HCT116 (cell line): ENCODE measurements at regions of chr15 and their contacts with region 1.

Region 1: GRCh38 chr15:90320061-90320884 is 31.8 kb upstream of the ZNF774 start:
- DNase-seq: peak; percentile 81
- ATAC-seq: peak; percentile 98
- H3K4me3 ChIP-seq: peak overlapping the region in 1 of 2 experiments; percentile 25; a peak in 1 of 4 replicates
- H3K27ac ChIP-seq: no peak overlapping the region
- H3K4me1 ChIP-seq: peaks cover 7 to 10% of the 10 kb centered on the region in 2 experiments; a peak in 2 of 4 replicates
- H3K27me3 ChIP-seq: no peaks in the 10 kb centered on the region
- CTCF ChIP-seq: peak; percentile 97 to 100 (median 99)
- POLR2A ChIP-seq: no peak
- RAD21 ChIP-seq: peak; percentile 97

Region 2: GRCh38 chr15:90300988-90301706 is 19.1 kb before region 1 on chr15:
- CTCF ChIA-PET with region 1: interaction called, 13 read pairs
- POLR2A ChIA-PET with region 1: no interaction called
- RAD21 ChIA-PET with region 1: no interaction called
- intact Hi-C with region 1: no loop called
- DNase-seq: peak; percentile 47
- ATAC-seq: peak; percentile 98
- H3K4me3 ChIP-seq: 0 out of 4 replicates have a peak overlapping the region, but pooled peaks of 1 of the 2 experiments have one; percentile 14
- H3K27ac ChIP-seq: peak overlapping the region; percentile 5; the same call in 1 of the 2 replicates
- H3K4me1 ChIP-seq: peaks cover 0 to 8% of the 10 kb centered on the region in 2 experiments; a peak in 3 of 4 replicates
- H3K27me3 ChIP-seq: no peaks in the 10 kb centered on the region
- CTCF ChIP-seq: peak; percentile 53 to 95 (median 92); a peak in 5 of 6 replicates
- POLR2A ChIP-seq: no peak
- RAD21 ChIP-seq: peak; percentile 27

Region 3: GRCh38 chr15:90482124-90483011 is 162.1 kb after region 1 on chr15:
- CTCF ChIA-PET with region 1: interaction called, 57 read pairs
- POLR2A ChIA-PET with region 1: interaction called, 3 read pairs
- RAD21 ChIA-PET with region 1: interaction called, 8 to 16 read pairs
- intact Hi-C with region 1: loop called (anchors 1 kb)
- DNase-seq: peak; percentile 34
- ATAC-seq: peak; percentile 55; the same call in 1 of the 2 replicates
- H3K4me3 ChIP-seq: no peak overlapping the region
- H3K27ac ChIP-seq: no peak overlapping the region
- H3K4me1 ChIP-seq: peaks cover 22 to 28% of the 10 kb centered on the region in 2 experiments
- H3K27me3 ChIP-seq: no peaks in the 10 kb centered on the region
- CTCF ChIP-seq: peak; percentile 76 to 88 (median 85)
- POLR2A ChIP-seq: no peak
- RAD21 ChIP-seq: peak; percentile 94

Region 4: DNA sequence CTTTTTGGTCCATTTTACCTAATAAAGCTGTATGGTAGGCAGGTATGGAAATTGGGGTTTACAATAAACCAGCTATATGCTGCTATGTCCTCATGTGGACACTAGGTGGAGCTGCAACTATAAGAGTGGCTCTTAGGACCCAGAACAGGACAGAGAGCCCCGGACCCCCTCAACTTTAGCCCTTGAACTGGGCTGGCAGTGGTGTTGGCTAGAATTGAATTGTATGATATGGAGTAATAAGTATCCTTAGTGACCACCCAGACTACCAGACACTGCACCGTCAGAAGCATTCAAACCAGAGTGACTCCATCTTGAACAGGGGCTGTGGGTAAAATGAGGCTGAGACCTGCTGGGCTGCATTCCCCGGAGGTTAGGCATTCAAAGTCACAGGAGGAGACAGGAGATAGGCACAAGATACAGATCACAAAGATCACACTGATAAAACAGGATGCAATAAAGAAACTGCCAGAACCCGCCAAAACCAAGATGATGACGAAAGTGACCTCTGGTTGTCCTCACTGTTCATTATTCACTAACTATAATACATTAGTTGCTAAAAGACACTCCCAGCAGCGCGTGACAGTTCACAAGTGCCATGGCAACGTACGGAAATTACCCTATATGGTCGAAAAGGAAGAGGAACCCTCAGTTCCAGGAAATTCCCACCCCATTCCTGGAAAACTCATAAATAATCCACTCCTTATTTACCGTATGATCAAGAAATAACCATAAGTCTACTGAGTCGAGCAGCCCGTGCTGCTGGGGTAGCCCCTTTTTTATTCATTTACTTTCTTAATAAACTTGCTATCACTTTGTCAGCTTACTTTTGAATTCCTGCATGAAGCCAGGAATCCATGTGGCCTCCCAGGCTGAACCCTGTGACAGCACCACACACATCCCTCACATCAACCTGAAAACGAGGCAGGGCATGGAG is 328.1 kb after region 1 on chr15:
- CTCF ChIA-PET with region 1: interaction called, 11 read pairs
- POLR2A ChIA-PET with region 1: no interaction called
- RAD21 ChIA-PET with region 1: interaction called in 1 of 2 experiments, 4 read pairs
- intact Hi-C with region 1: no loop called
- DNase-seq: peak; percentile 48
- ATAC-seq: peak; percentile 81
- H3K4me3 ChIP-seq: no peak overlapping the region
- H3K27ac ChIP-seq: no peak overlapping the region
- H3K4me1 ChIP-seq: peaks cover 0 to 23% of the 10 kb centered on the region in 2 experiments; a peak in 3 of 4 replicates
- H3K27me3 ChIP-seq: no peaks in the 10 kb centered on the region
- CTCF ChIP-seq: peak; percentile 82 to 91 (median 87)
- POLR2A ChIP-seq: no peak
- RAD21 ChIP-seq: peak; percentile 96

Region 5: GRCh38 chr15:90886041-90886614 is 565.9 kb after region 1 on chr15:
- CTCF ChIA-PET with region 1: interaction called, 18 read pairs
- POLR2A ChIA-PET with region 1: no interaction called
- RAD21 ChIA-PET with region 1: interaction called, 3 to 5 read pairs
- intact Hi-C with region 1: loop called (anchors 1 kb)
- DNase-seq: no peak
- ATAC-seq: peak; percentile 84
- H3K4me3 ChIP-seq: no peak overlapping the region
- H3K27ac ChIP-seq: no peak overlapping the region
- H3K4me1 ChIP-seq: peaks cover 0 to 3% of the 10 kb centered on the region in 2 experiments; a peak in 1 of 4 replicates
- H3K27me3 ChIP-seq: no peaks in the 10 kb centered on the region
- CTCF ChIP-seq: peak; percentile 95 to 100 (median 98)
- POLR2A ChIP-seq: no peak
- RAD21 ChIP-seq: peak; percentile 99